GM12878 (cell line): ENCODE measurements at regions of chr9 and their contacts with region 1.

Region 1: DNA sequence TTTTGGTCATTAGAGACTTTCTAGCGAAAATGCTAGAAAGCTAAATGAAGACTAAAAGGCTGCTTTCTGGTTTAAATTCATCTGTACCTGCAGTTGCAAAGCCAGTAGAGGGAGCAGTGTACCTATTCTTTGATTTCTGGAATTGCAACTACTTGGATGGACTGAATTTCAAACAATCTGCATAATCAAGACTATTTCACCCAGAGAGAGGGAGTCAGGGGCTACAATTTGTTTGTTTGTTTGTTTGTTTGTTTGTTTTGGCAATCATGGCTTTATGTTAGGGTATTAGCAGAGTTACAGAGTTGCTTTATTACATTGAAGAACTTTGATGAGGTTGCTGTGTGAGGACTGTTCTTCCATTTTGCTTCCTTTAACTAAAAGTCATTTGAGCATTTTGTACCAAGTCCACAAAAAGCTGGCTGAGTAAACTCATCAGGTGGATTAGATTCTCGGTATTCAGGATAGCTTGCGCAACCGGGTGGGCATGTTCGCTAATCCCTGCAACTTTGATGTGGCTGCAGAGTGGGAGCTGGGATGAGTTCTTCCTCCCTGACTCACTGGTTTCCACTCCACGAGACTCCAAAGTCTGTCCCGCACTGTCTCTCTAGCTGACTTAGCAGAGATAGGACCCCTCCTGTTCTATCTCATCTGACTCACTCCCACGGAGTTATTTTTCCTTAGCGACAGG is 80.0 kb upstream of the TUT7 start:
- DNase-seq: no peak
- ATAC-seq: peak; percentile 58; the same call in 2 of the 3 replicates
- H3K4me3 ChIP-seq: no peak overlapping the region
- H3K27ac ChIP-seq: no peak overlapping the region
- H3K4me1 ChIP-seq: no peaks in the 10 kb centered on the region
- H3K27me3 ChIP-seq: no peaks in the 10 kb centered on the region
- CTCF ChIP-seq: peak; percentile 57 to 79 (median 68)
- EP300 ChIP-seq: no peak
- POLR2A ChIP-seq: no peak
- RAD21 ChIP-seq: peak; percentile 81

Region 2: GRCh38 chr9:86413966-86414880 is 20.0 kb before region 1 on chr9:
- CTCF ChIA-PET with region 1: interaction called, 21 read pairs
- POLR2A ChIA-PET with region 1: no interaction called
- RAD21 ChIA-PET with region 1: no interaction called
- SMC1A ChIA-PET with region 1: interaction called, 3 read pairs
- in situ Hi-C with region 1: no loop called
- intact Hi-C with region 1: no loop called
- DNase-seq: no peak
- ATAC-seq: peak; percentile 60
- H3K4me3 ChIP-seq: no peak overlapping the region
- H3K27ac ChIP-seq: no peak overlapping the region
- H3K4me1 ChIP-seq: no peaks in the 10 kb centered on the region
- H3K27me3 ChIP-seq: no peaks in the 10 kb centered on the region; a peak in 1 of 4 replicates
- CTCF ChIP-seq: peak; percentile 34 to 58 (median 54); a peak in 5 of 6 replicates
- EP300 ChIP-seq: no peak
- POLR2A ChIP-seq: no peak
- RAD21 ChIP-seq: peak; percentile 61

Region 3: GRCh38 chr9:86445671-86446070 is 11.5 kb after region 1 on chr9:
- CTCF ChIA-PET with region 1: interaction called, 10 read pairs
- POLR2A ChIA-PET with region 1: no interaction called
- RAD21 ChIA-PET with region 1: no interaction called
- SMC1A ChIA-PET with region 1: no interaction called
- in situ Hi-C with region 1: no loop called
- intact Hi-C with region 1: no loop called
- DNase-seq: no peak
- ATAC-seq: no peak
- H3K4me3 ChIP-seq: no peak overlapping the region
- H3K27ac ChIP-seq: no peak overlapping the region
- H3K4me1 ChIP-seq: no peaks in the 10 kb centered on the region
- H3K27me3 ChIP-seq: no peaks in the 10 kb centered on the region
- CTCF ChIP-seq: no peak
- EP300 ChIP-seq: no peak
- POLR2A ChIP-seq: no peak
- RAD21 ChIP-seq: no peak

Region 4: DNA sequence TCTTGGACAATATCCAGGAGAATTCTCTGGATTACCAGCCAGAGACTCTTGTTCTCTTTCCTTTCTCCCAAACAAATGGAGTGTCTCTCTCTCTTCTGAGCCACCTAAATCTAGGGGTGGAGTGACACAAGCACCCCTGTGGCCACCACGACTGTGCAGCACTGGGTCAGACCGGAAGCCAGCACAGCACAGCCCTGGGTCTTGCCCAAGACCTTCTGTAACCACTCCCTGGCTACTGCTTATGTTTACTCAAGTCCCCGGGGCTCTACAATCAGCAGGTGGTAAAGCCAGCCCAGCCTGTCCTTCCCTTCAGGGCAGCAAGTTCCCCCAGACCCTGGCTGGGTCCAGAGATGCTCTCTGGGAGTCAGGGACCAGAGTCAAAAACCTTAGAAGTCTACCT is 30.1 kb after region 1 on chr9:
- CTCF ChIA-PET with region 1: no interaction called
- POLR2A ChIA-PET with region 1: no interaction called
- RAD21 ChIA-PET with region 1: no interaction called
- SMC1A ChIA-PET with region 1: no interaction called
- in situ Hi-C with region 1: no loop called
- intact Hi-C with region 1: no loop called
- DNase-seq: no peak
- ATAC-seq: no peak
- H3K4me3 ChIP-seq: no peak overlapping the region
- H3K27ac ChIP-seq: no peak overlapping the region
- H3K4me1 ChIP-seq: no peaks in the 10 kb centered on the region
- H3K27me3 ChIP-seq: no peaks in the 10 kb centered on the region
- CTCF ChIP-seq: no peak
- EP300 ChIP-seq: no peak
- POLR2A ChIP-seq: no peak
- RAD21 ChIP-seq: no peak

Region 5: GRCh38 chr9:86585422-86586143 is 151.4 kb after region 1 on chr9:
- CTCF ChIA-PET with region 1: no interaction called
- POLR2A ChIA-PET with region 1: no interaction called
- RAD21 ChIA-PET with region 1: no interaction called
- SMC1A ChIA-PET with region 1: no interaction called
- in situ Hi-C with region 1: no loop called
- intact Hi-C with region 1: no loop called
- DNase-seq: no peak
- ATAC-seq: no peak
- H3K4me3 ChIP-seq: no peak overlapping the region
- H3K27ac ChIP-seq: no peak overlapping the region
- H3K4me1 ChIP-seq: no peaks in the 10 kb centered on the region
- H3K27me3 ChIP-seq: no peaks in the 10 kb centered on the region
- CTCF ChIP-seq: no peak
- EP300 ChIP-seq: no peak
- POLR2A ChIP-seq: no peak
- RAD21 ChIP-seq: no peak

Region 6: GRCh38 chr9:86948074-86948929 is 514.1 kb after region 1 on chr9:
- CTCF ChIA-PET with region 1: no interaction called
- POLR2A ChIA-PET with region 1: no interaction called
- RAD21 ChIA-PET with region 1: no interaction called
- SMC1A ChIA-PET with region 1: no interaction called
- in situ Hi-C with region 1: no loop called
- intact Hi-C with region 1: loop called (anchors 10 kb)
- DNase-seq: no peak
- ATAC-seq: peak; percentile 94
- H3K4me3 ChIP-seq: peak overlapping the region; percentile 33; the same call in 1 of the 2 replicates
- H3K27ac ChIP-seq: no peak overlapping the region
- H3K4me1 ChIP-seq: no peaks in the 10 kb centered on the region
- H3K27me3 ChIP-seq: peaks cover 6 to 7% of the 10 kb centered on the region in 2 experiments
- CTCF ChIP-seq: peak; percentile 62 to 81 (median 78)
- EP300 ChIP-seq: no peak
- POLR2A ChIP-seq: no peak
- RAD21 ChIP-seq: 0 out of 2 replicates have a peak, but pooled peaks have one; percentile 39